ENCODE measurements at regions of chr16 and their contacts with region 1.

Region 1: GRCh38 chr16:89764711-89765201 is 43.4 kb downstream of the ZNF276 start:
- DNase-seq: peak; percentile 91
- ATAC-seq: peak; percentile 95
- H3K4me3 ChIP-seq: peak overlapping the region; percentile 34; the same call in 1 of the 2 replicates
- H3K27ac ChIP-seq: peak overlapping the region; percentile 83
- H3K4me1 ChIP-seq: peaks cover 50% of the 10 kb centered on the region
- H3K27me3 ChIP-seq: no peaks in the 10 kb centered on the region
- CTCF ChIP-seq: no peak
- EP300 ChIP-seq: peak; percentile 73 to 98; a peak in 3 of 4 replicates
- POLR2A ChIP-seq: peak; percentile 69; the same call in 1 of the 2 replicates
- RAD21 ChIP-seq: no peak

Region 2: DNA sequence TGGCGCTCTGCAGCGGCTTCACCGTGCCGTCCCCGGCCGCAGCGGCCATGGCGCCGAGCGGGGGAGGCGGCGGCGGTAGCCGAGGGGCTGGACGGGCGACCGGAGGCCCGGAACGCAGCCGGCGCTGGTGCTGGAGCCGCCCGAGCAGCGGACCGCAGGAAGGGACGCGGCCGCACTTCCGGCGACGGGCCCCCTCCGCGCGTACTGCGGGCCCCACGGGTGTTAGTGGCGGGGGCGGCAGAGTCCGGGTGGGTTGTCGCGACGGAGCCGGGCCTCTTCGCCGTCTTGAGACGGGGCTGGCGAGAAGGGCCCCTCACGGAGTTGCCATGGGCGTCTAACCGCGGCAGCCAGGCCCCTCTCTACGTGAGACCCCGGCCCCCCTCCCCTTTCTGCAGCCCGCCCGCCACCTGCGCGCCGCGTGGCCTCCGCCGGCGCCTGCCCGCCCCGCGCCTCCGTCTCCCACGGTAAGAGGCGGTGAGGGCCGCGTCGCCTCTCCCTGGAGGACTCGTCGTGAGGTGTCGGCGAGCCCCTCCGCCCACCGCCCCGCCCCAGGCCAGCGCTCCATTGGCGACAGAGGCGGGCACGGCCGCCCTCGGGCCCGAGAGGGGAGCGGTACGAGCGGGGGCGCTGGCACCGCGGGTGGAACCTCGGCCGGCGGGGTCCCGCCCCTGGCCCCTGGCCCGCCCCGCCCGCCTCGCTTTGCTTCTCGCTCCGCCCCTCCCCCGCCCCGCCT is 43.8 kb before region 1 on chr16 and contains the starts of genes VPS9D1 and ZNF276:
- CTCF ChIA-PET with region 1: no interaction called
- POLR2A ChIA-PET with region 1: no interaction called
- RAD21 ChIA-PET with region 1: no interaction called
- SMC1A ChIA-PET with region 1: interaction called, 3 read pairs
- in situ Hi-C with region 1: no loop called
- intact Hi-C with region 1: loop called (anchors 2 kb)
- DNase-seq: no peak
- ATAC-seq: peak; percentile 78
- H3K4me3 ChIP-seq: peak within 1 kb of the TSS; percentile 93
- H3K27ac ChIP-seq: peak within 1 kb of the TSS; percentile 63
- H3K4me1 ChIP-seq: peaks cover 31% of the 10 kb centered on the region
- H3K27me3 ChIP-seq: no peaks in the 10 kb centered on the region
- CTCF ChIP-seq: no peak
- EP300 ChIP-seq: no peak
- POLR2A ChIP-seq: peak; percentile 81
- RAD21 ChIP-seq: no peak
- polyA plus RNA-seq, gene VPS9D1: 0.85 to 1.1 TPM
- polyA plus RNA-seq, gene ZNF276: 0.27 to 0.93 TPM

Region 3: DNA sequence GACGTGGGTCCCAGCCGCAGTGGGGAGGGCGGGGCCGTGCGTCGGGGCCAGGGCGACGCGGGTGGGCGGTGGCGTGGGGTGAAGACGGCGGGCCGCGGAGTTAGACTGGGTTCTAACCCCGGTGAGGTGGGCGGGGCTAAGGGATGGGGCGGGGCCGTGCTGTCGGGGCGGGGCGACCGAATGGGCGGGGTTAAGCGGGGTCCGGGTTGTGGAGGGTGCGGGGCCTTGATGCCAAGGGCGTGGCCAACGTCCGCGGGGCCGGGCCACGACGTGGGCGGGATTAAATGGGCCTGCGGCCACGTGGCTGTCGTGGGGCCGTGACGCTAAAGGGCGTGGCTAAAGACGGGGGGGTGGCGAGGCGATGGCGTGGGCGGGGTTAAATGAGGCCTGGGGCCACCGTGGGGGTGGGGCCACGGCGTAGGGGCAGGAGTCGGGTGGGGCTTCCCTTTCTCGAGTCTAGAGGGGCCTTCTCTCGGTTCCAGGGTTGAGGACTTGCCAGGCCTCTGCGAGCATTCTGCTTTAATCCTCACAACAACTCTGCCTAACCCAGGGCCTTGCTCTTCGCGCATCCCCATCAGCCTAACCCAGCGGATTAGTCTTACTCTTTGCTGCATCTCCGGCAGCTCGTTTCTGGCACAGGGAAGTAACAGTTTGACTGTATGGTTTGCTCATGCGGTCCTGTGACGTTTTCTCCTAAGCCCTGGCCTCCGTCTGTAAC is 109.4 kb after region 1 on chr16:
- CTCF ChIA-PET with region 1: no interaction called
- POLR2A ChIA-PET with region 1: interaction called, 10 read pairs
- RAD21 ChIA-PET with region 1: interaction called, 6 read pairs
- SMC1A ChIA-PET with region 1: no interaction called
- in situ Hi-C with region 1: no loop called
- intact Hi-C with region 1: no loop called
- DNase-seq: peak; percentile 81
- ATAC-seq: peak; percentile 79
- H3K4me3 ChIP-seq: peak overlapping the region; percentile 99
- H3K27ac ChIP-seq: peak overlapping the region; percentile 100
- H3K4me1 ChIP-seq: peaks cover 15% of the 10 kb centered on the region
- H3K27me3 ChIP-seq: no peaks in the 10 kb centered on the region
- CTCF ChIP-seq: no peak
- EP300 ChIP-seq: no peak
- POLR2A ChIP-seq: peak; percentile 5
- RAD21 ChIP-seq: no peak